ENCODE measurements at regions of chr15 and their contacts with region 1.

Region 1: DNA sequence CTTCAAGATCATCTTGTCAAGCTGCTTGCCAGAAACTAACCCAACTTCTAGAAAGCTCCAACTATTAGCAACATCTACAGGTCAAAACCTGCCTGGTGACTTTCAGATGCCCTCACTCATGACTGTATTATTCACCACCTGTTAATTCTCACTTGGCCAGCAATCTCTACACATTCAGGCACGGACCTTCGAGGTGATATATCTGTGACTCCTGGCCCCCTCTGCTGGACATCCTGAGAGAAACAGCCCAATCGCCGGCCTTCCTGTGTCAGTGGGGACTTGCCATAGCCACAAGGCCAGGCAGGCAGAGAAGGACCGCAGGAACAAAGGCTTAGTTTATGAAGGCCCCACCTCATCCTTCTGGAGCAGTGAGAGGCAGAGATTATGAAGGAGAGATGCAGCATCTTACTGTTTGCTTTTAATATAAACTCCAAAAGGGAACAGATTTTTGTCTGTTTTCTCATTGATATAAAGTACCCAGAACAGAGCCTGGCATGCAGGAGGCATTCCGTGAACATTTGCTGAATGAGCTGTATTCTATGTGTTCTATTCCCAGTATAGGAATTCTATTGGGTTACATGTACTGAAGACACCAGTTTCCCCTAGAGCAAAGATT is 24.4 kb upstream of the OCA2 start:
- DNase-seq: peak; percentile 44 to 87
- H3K4me3 ChIP-seq: no peak overlapping the region
- H3K27ac ChIP-seq: no peak overlapping the region
- H3K4me1 ChIP-seq: no peaks in the 10 kb centered on the region
- H3K27me3 ChIP-seq: no peaks in the 10 kb centered on the region
- CTCF ChIP-seq: peak; percentile 62 to 81 (median 81)

Region 2: DNA sequence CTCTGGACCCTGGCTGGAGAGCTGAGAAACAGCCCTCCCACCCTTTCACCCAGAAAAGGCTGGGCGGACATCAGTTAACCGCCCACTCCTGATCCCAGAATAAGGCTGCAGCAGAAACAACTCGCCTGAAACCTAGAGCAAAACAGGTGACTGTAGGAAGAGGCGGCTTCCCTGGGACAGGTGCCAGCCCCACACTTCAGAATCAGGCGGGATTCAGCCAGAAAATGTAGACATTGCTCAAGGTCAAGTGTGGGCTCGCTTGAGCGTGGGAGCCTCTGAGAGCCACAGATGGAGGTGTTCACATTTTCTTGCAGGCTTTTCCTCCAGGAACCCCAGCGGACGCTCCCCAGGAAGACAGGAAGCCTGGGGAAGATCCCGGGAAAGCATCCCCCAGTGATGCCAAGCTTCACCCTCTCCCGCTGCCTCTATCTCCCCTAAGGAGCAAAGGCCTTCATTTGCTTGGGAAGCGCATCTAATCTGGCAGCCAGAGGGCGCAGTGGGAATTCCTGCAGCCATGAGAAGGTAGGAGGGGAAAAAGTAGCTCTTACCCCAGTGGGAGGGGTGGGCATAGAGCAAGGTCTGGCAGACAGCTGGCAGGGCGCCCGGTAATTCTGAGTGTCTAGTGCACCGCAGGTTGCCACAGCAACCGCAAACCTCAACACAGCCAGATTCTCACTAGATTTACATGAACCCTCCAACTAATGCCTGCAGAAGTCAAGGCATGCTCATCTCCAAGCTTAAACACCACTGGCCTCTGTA is 102.1 kb before region 1 on chr15:
- intact Hi-C with region 1: loop called (anchors 2 kb)
- DNase-seq: no peak
- H3K4me3 ChIP-seq: no peak overlapping the region
- H3K27ac ChIP-seq: no peak overlapping the region
- H3K4me1 ChIP-seq: no peaks in the 10 kb centered on the region
- H3K27me3 ChIP-seq: no peaks in the 10 kb centered on the region
- CTCF ChIP-seq: peak; percentile 18 to 65 (median 33)

Region 3: GRCh38 chr15:28068930-28069329 is 54.6 kb before region 1 on chr15:
- intact Hi-C with region 1: no loop called
- DNase-seq: no peak
- H3K4me3 ChIP-seq: no peak overlapping the region
- H3K27ac ChIP-seq: no peak overlapping the region
- H3K4me1 ChIP-seq: no peaks in the 10 kb centered on the region
- H3K27me3 ChIP-seq: no peaks in the 10 kb centered on the region
- CTCF ChIP-seq: no peak

Region 4: DNA sequence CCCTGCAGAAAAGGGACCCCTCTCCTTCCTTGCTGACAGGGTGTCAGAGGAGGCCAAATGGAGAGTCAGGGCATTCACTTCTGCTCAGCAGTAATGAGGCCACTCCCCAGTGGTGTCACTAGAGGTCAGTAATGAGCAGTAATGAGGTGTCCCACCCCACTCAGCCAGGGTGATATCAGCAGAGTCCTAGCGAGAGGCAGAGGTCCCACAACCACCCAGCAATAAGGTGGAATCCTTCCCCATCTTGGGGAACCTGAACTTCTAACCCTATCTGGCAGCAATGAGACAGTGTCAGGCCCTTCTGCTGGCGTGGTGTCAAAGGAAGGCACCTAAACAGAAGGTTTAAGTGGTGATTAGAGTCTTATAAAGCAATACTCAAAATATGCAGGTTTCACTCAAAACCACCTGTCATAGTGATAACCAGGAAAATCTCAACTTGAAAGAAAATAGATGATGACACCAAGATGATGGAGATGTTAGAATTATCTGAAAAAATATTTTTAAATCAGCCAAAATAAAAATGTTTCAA is 37.3 kb before region 1 on chr15:
- intact Hi-C with region 1: loop called (anchors 1 kb)
- DNase-seq: peak in 1 of 2 donors; percentile 82
- H3K4me3 ChIP-seq: no peak overlapping the region
- H3K27ac ChIP-seq: peak overlapping the region in 1 of 2 donors; percentile 31
- H3K4me1 ChIP-seq: no peaks in the 10 kb centered on the region
- H3K27me3 ChIP-seq: no peaks in the 10 kb centered on the region
- CTCF ChIP-seq: peak; percentile 63 to 75 (median 68)

Measured in ascending aorta (tissue), 2 donors.